ENCODE measurements at regions of chr18 and their contacts with region 1.

Region 1: DNA sequence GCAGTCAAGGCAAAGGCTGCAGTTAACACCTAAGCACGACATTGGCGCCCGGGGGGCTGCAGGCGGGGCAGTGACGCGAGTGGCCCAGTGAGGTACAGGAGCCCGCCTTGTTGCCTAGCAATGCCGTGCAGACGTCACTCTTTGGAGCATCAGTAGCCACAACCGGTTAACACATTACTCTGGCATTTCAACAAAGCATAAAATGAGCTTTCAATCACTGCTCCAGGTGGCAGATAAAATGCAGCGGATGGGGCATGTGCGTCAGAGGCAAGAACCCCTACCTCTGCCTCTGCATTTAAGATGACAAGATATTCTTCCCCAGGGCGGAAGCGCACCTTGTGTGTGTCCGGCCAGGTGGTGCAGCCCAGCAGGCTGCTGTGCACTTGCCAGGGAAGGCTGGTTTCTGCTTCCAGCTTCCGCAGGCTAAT is 139.4 kb downstream of the MTCL1 start:
- DNase-seq: no peak
- H3K4me3 ChIP-seq: no peak overlapping the region
- H3K27ac ChIP-seq: no peak overlapping the region
- H3K4me1 ChIP-seq: peaks cover 5% of the 10 kb centered on the region; the same call in 1 of the 2 replicates
- H3K27me3 ChIP-seq: no peaks in the 10 kb centered on the region
- CTCF ChIP-seq: no peak

Region 2: DNA sequence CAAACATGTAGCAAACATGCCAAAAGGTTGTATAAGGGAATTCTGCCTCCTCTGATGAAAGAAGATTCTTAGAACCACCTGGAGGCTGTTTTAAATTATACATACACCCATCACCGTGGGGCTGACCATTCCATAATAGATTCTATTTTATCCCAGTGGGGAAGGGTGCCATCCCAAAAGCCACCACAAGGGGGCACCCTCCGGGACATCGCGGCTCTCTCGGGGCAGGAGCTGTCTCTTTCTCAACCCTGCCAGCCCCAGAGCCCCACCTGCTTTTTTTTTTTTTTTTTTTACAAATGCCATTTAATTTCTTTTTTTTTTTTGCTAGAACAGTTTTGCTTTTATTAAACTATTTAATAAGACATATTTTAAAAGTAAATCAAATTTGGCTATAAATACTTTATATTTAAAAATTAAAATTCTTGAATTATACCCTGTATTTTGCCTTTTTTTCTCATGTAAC is 148.0 kb before region 1 on chr18:
- CTCF ChIA-PET with region 1: interaction called, 16 read pairs
- POLR2A ChIA-PET with region 1: interaction called, 6 read pairs
- intact Hi-C with region 1: no loop called
- DNase-seq: peak in 1 of 2 experiments; percentile 84
- H3K4me3 ChIP-seq: no peak overlapping the region
- H3K27ac ChIP-seq: no peak overlapping the region
- H3K4me1 ChIP-seq: no peaks in the 10 kb centered on the region
- H3K27me3 ChIP-seq: no peaks in the 10 kb centered on the region
- CTCF ChIP-seq: peak; percentile 94

Measured in PC-9 (cell line).